Activated CD8-positive, alpha-beta T cell treated with anti-CD3 and anti-CD28 coated beads, Interleukin-2, amount 10 ng/mL, durations not matched to agents 7 days and 5 days (primary cell): ENCODE measurements at regions of chr14 and their contacts with region 1.

Region 1: DNA sequence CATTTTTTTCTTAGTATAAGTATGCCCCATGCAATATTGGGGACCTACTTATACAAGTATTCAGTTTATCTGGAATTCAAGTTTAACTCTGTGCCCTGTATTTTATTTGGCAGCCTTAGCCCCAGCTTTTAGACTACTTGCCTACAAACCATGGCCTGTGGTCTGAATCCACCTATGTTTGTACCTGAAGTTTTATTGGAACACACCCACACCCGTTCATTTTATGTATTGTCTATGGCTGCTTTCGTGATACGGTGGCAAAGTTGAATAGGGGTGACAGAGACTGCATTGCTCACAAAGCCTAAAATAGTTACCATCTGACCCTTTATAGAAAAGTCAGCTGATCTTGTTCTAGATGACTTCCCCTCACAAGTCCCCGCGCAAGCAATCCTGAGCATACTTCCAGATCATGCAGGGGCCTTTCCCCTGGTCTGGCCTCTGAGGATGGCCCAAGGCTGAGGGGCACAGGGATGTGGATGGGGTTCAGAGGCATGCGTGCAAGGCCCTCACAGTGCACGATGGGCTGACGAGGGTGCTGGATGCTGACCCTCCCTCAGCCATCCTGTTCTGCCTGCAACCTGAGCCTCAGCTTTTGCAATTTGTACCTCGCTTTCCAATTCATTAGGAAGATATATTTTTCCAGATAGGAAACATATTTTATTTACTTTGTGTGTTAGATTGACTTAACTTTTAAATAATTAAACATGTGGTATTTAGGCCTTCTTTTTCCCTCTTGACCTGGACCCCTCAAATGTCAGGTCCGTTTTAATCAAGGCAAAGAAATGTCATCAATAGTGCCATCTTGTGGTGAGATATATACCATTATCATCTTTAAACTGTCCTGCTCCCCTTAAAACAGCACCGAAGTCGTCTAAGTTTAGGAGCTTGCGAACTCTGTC is 527.3 kb upstream of the CCDC196 start:
- DNase-seq: no peak
- ATAC-seq: peak; percentile 77
- H3K4me3 Mint-ChIP-seq: no peak overlapping the region
- H3K27ac Mint-ChIP-seq: peak overlapping the region; percentile 56
- H3K4me1 Mint-ChIP-seq: peaks cover 34% of the 10 kb centered on the region
- H3K27me3 Mint-ChIP-seq: peaks cover 6% of the 10 kb centered on the region

Region 2: GRCh38 chr14:65412032-65412846 is 546.7 kb before region 1 on chr14 and contains the start of gene FUT8:
- CTCF ChIA-PET with region 1: interaction called, 81 read pairs
- POLR2A ChIA-PET with region 1: interaction called, 3 read pairs
- DNase-seq: peak; percentile 95
- ATAC-seq: peak; percentile 89
- H3K4me3 Mint-ChIP-seq: peak within 1 kb of the TSS; percentile 100
- H3K27ac Mint-ChIP-seq: peak within 1 kb of the TSS; percentile 98
- H3K4me1 Mint-ChIP-seq: peaks cover 53% of the 10 kb centered on the region
- H3K27me3 Mint-ChIP-seq: no peaks in the 10 kb centered on the region
- total RNA-seq, gene FUT8: 99.2 to 101 TPM

Region 3: GRCh38 chr14:65840118-65840751 is 118.7 kb before region 1 on chr14:
- CTCF ChIA-PET with region 1: interaction called, 58 read pairs
- POLR2A ChIA-PET with region 1: no interaction called
- DNase-seq: no peak
- ATAC-seq: no peak
- H3K4me3 Mint-ChIP-seq: no peak overlapping the region
- H3K27ac Mint-ChIP-seq: peak overlapping the region; percentile 65
- H3K4me1 Mint-ChIP-seq: peaks cover 89% of the 10 kb centered on the region
- H3K27me3 Mint-ChIP-seq: no peaks in the 10 kb centered on the region

Region 4: GRCh38 chr14:65860956-65861611 is 97.8 kb before region 1 on chr14:
- CTCF ChIA-PET with region 1: interaction called, 15 read pairs
- POLR2A ChIA-PET with region 1: no interaction called
- DNase-seq: peak; percentile 84
- ATAC-seq: peak; percentile 89
- H3K4me3 Mint-ChIP-seq: peak overlapping the region; percentile 59
- H3K27ac Mint-ChIP-seq: peak overlapping the region; percentile 88
- H3K4me1 Mint-ChIP-seq: peaks cover 69% of the 10 kb centered on the region
- H3K27me3 Mint-ChIP-seq: no peaks in the 10 kb centered on the region

Region 5: DNA sequence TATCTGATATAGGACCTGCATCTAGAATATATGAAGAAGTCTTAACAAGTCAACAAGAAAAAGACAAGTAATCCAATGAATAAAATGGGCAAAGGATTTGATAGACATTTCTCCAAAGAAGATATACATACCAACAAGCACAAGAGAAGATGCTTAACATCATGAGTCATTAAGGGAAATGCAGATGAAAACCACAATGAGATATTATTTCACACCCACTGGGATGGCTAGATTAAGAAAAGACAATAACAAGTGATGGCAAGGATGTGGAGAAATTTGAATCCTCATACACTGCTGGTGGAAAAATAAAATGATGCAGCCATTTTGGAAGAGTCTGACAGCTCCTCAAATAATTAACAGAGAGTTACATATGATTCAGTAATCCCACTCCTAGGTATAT is 43.8 kb before region 1 on chr14:
- CTCF ChIA-PET with region 1: interaction called, 21 read pairs
- POLR2A ChIA-PET with region 1: interaction called, 4 read pairs
- DNase-seq: no peak
- ATAC-seq: no peak
- H3K4me3 Mint-ChIP-seq: no peak overlapping the region
- H3K27ac Mint-ChIP-seq: no peak overlapping the region
- H3K4me1 Mint-ChIP-seq: peaks cover 54% of the 10 kb centered on the region
- H3K27me3 Mint-ChIP-seq: no peaks in the 10 kb centered on the region

Region 6: DNA sequence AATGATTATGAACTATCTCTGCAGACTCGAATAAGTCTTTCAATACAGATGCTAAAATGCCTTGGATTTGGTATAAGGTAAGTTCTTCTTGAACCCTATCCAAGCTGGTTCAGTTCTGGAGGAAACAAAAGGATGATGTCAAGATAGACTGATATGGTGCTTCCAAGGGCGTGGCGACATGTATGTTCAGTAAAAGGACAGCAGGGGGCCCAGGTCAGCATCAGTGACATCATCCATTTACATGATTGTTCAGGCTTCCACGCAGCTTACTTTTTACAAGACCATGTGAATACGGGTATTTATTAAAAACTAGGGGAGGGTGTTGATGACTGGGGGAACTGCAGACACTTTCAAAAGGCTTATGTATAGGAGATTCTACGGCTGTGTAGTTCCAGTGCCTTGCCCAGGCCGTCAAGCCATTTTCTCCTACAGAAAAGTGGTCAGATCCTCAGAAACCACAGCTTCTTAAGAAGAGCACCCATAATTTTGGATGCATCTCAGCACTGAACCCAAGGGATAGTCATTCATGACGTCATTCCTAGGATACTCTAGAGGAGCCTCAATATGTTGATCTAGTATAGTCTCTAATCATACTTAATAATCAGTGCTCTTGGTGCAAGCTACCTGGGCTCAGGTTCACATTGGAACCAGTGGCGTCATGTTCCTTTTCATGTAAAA is 18.7 kb before region 1 on chr14:
- CTCF ChIA-PET with region 1: interaction called, 51 read pairs
- POLR2A ChIA-PET with region 1: no interaction called
- DNase-seq: peak; percentile 50
- ATAC-seq: peak; percentile 49
- H3K4me3 Mint-ChIP-seq: no peak overlapping the region
- H3K27ac Mint-ChIP-seq: no peak overlapping the region
- H3K4me1 Mint-ChIP-seq: peaks cover 53% of the 10 kb centered on the region
- H3K27me3 Mint-ChIP-seq: no peaks in the 10 kb centered on the region

Region 7: DNA sequence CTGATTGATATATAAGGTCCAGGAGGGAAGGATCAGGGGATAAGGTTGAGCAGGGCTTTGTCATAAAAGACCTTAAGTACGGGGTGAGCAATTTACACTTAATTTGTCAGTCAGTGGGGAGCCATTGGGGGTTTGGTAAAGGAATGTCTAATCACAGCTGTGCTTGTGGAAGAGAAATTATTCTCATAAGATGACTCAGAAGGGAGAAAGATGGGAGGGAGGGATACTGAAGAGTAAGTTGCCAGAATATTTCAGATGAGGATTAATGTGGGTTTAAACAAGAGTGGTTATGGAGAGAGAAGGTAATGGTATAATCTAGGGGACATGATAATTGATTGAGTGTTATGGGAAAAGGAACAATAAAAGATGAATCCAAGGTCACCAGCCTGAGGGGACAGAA is 27.1 kb after region 1 on chr14:
- CTCF ChIA-PET with region 1: no interaction called
- POLR2A ChIA-PET with region 1: no interaction called
- DNase-seq: no peak
- ATAC-seq: no peak
- H3K4me3 Mint-ChIP-seq: no peak overlapping the region
- H3K27ac Mint-ChIP-seq: no peak overlapping the region
- H3K4me1 Mint-ChIP-seq: peaks cover 6% of the 10 kb centered on the region
- H3K27me3 Mint-ChIP-seq: peaks cover 22% of the 10 kb centered on the region

Region 8: DNA sequence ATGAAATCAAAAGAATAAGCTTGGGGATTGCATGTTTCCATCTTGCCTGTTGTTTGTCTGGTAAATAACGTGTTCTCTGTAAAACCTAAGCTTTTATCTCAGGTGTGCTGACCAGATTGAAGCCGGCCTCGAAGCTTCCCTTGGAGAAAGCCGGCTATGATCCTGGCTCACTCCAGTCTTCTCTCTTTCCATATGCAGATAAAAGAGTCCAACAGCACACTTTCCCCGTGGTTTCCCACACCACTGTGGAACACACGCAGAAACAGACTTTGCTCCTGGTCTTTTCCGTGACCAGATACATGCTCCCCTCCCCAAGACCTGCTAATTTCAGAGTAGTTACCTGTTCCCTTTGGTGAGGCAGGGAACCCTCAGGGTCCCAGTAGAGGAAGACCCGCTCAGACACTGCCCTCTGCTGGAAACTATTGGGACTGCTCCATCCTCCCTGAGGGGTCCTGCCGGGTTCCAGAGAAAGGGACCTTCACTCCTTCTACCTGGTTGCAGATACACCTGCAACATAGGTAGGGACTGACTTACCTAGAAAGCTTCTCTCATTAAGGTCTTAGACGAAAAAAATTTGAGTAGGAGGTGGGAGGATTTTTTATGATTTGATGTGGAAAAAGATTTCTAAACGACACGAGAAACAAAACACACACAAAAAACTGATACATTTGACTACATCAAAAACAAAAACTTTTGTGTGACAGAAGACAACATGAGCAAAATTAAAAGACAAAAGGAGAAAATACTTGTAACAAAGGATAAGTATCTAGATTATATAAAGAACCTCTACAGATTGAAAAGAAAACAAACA is 111.8 kb after region 1 on chr14:
- CTCF ChIA-PET with region 1: interaction called, 47 read pairs
- POLR2A ChIA-PET with region 1: no interaction called
- DNase-seq: peak; percentile 82
- ATAC-seq: peak; percentile 77
- H3K4me3 Mint-ChIP-seq: no peak overlapping the region
- H3K27ac Mint-ChIP-seq: no peak overlapping the region
- H3K4me1 Mint-ChIP-seq: peaks cover 13% of the 10 kb centered on the region
- H3K27me3 Mint-ChIP-seq: peaks cover 6% of the 10 kb centered on the region

Region 9: GRCh38 chr14:66240092-66240491 is 281.2 kb after region 1 on chr14:
- CTCF ChIA-PET with region 1: no interaction called
- POLR2A ChIA-PET with region 1: no interaction called
- DNase-seq: no peak
- ATAC-seq: no peak
- H3K4me3 Mint-ChIP-seq: no peak overlapping the region
- H3K27ac Mint-ChIP-seq: no peak overlapping the region
- H3K4me1 Mint-ChIP-seq: no peaks in the 10 kb centered on the region
- H3K27me3 Mint-ChIP-seq: peaks cover 10% of the 10 kb centered on the region

Region 10: GRCh38 chr14:66868004-66868403 is 909.1 kb after region 1 on chr14:
- CTCF ChIA-PET with region 1: no interaction called
- POLR2A ChIA-PET with region 1: no interaction called
- DNase-seq: no peak
- ATAC-seq: no peak
- H3K4me3 Mint-ChIP-seq: no peak overlapping the region
- H3K27ac Mint-ChIP-seq: no peak overlapping the region
- H3K4me1 Mint-ChIP-seq: no peaks in the 10 kb centered on the region
- H3K27me3 Mint-ChIP-seq: no peaks in the 10 kb centered on the region